ENCODE measurements at regions of chr12 and their contacts with region 1.

Region 1: GRCh38 chr12:103909811-103910210 is 20.4 kb upstream of the HSP90B1 start:
- DNase-seq: no peak
- H3K4me3 Mint-ChIP-seq: no peak overlapping the region
- H3K27ac Mint-ChIP-seq: no peak overlapping the region
- H3K4me1 Mint-ChIP-seq: peaks cover 16% of the 10 kb centered on the region
- H3K27me3 Mint-ChIP-seq: peaks cover 2% of the 10 kb centered on the region

Region 2: GRCh38 chr12:103858953-103859601 is 50.7 kb before region 1 on chr12:
- CTCF ChIA-PET with region 1: no interaction called
- POLR2A ChIA-PET with region 1: no interaction called
- DNase-seq: no peak
- H3K4me3 Mint-ChIP-seq: no peak overlapping the region
- H3K27ac Mint-ChIP-seq: no peak overlapping the region
- H3K4me1 Mint-ChIP-seq: no peaks in the 10 kb centered on the region
- H3K27me3 Mint-ChIP-seq: no peaks in the 10 kb centered on the region

Region 3: GRCh38 chr12:103929046-103929783 is 19.4 kb after region 1 on chr12:
- CTCF ChIA-PET with region 1: interaction called, 4 read pairs
- POLR2A ChIA-PET with region 1: interaction called, 10 read pairs
- DNase-seq: peak; percentile 89
- H3K4me3 Mint-ChIP-seq: peak overlapping the region; percentile 85
- H3K27ac Mint-ChIP-seq: peak overlapping the region; percentile 100
- H3K4me1 Mint-ChIP-seq: peaks cover 59% of the 10 kb centered on the region
- H3K27me3 Mint-ChIP-seq: no peaks in the 10 kb centered on the region

Measured in activated CD4-positive, alpha-beta T cell treated with anti-CD3 and anti-CD28 coated beads, Interleukin-2, amount 10 ng/mL, durations not matched to agents 7 days and 5 days (primary cell).